Psoas muscle (tissue), 8 donors: ENCODE measurements at regions of chr2 and their contacts with region 1.

Region 1: GRCh38 chr2:109736177-109736827 is 57.8 kb upstream of the RGPD5 start:
- DNase-seq: peak in 1 of 2 donors; percentile 32
- ATAC-seq: peak; percentile 58 to 83 (median 68)
- H3K4me3 ChIP-seq: no peak overlapping the region
- H3K27ac ChIP-seq: no peak overlapping the region
- H3K4me1 ChIP-seq: peaks cover 4% of the 10 kb centered on the region
- H3K27me3 ChIP-seq: no peaks in the 10 kb centered on the region
- CTCF ChIP-seq: peak; percentile 80

Region 2: GRCh38 chr2:109545828-109546713 is 190.2 kb before region 1 on chr2:
- intact Hi-C with region 1: loop called (anchors 1 to 2 kb)
- DNase-seq: peak; percentile 53 to 75
- ATAC-seq: peak; percentile 84 to 94 (median 88)
- H3K4me3 ChIP-seq: no peak overlapping the region
- H3K27ac ChIP-seq: no peak overlapping the region
- H3K4me1 ChIP-seq: no peaks in the 10 kb centered on the region
- H3K27me3 ChIP-seq: peaks cover 0 to 4% (median 0%) of the 10 kb centered on the region in 3 donors
- CTCF ChIP-seq: peak; percentile 92

Region 3: DNA sequence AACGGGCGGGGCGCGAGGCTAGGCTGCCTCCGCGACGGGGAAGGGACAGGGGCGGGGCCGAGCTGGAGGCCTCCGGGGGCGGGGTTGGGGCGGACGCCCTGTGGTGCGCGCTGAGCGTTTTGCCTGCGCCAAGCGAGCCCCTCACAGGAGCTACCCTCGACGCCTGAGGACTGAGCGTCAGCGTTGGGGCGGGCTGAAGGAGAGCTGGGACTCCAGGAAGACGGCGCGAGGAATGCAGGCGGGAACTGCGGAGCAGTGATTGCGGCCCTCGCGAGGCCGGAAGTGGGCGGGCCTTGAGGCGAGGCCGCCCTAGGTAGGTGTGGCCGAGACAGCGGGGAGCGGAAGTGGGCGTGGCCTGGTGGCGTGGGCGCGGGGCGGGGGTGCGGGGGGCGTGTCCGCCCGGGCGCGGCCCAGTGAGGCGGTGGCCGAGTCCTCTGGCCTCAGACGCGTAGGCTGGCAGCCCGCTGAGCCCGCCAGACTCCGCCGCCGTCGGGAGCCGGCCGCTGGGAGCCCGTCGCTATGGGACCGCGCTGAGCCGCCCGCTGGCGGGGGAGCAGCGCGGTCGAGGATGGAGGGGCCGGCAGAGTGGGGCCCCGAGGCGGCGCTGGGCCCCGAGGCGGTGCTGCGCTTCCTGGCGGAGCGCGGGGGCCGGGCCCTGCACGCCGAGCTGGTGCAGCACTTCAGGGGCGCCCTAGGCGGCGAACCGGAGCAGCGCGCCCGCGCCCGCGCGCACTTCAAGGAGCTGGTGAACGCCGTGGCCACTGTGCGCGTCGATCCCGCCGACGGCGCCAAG is 122.2 kb before region 1 on chr2 and contains the starts of genes SEPTIN10 and SOWAHC:
- intact Hi-C with region 1: loop called in 1 of 2 experiments (anchors 5 kb)
- DNase-seq: peak; percentile 97 to 98
- ATAC-seq: peak; percentile 97 to 98 (median 98)
- H3K4me3 ChIP-seq: peak within 1 kb of the TSS; percentile 77
- H3K27ac ChIP-seq: peak within 1 kb of the TSS; percentile 97
- H3K4me1 ChIP-seq: peaks cover 21% of the 10 kb centered on the region
- H3K27me3 ChIP-seq: no peaks in the 10 kb centered on the region
- CTCF ChIP-seq: peak; percentile 3
- total RNA-seq, gene SEPTIN10: 26.6 to 39.8 (median 35.4) TPM
- total RNA-seq, gene SOWAHC: 0.75 to 1.1 (median 0.93) TPM

Region 4: DNA sequence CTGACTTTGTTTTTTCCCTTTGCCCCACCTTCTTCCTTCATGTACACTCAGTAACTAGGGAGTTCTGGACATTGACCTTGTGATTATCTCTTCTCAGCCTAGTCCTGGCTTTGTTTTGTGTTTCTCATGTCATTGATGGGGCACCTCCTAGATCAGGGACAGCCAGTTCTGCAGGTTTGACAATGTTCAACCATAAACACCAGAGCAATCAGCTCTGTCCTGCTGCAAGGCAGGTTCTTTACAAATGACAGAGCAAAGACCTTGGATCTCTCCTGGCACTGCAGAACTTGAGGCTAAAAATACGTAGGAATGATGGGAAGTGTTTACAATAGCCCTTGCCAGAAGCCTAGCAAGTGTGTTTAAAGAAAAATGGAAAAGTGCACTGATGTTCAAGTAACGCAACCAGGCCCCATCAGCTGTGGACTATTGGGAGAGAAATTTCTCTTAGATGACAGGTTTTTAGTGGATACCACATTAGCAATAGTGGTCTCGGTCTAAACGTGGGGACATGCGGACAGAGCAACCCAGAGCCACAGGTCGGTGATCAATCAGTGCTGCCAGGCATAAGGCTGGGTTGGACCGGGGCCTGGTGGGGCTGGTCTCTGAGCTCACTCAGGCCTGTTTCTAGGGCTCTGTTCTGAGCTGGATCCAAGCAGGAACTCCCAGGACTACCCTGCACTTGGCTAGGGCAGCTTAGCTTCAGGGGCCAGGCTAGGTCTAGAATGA is 45.3 kb before region 1 on chr2:
- intact Hi-C with region 1: no loop called
- DNase-seq: peak in 1 of 2 donors; percentile 33
- ATAC-seq: peak; percentile 68 to 87 (median 78)
- H3K4me3 ChIP-seq: no peak overlapping the region
- H3K27ac ChIP-seq: peak overlapping the region; percentile 68
- H3K4me1 ChIP-seq: peaks cover 11% of the 10 kb centered on the region
- H3K27me3 ChIP-seq: no peaks in the 10 kb centered on the region
- CTCF ChIP-seq: no peak

Region 5: GRCh38 chr2:109715313-109715805 is 20.9 kb before region 1 on chr2:
- intact Hi-C with region 1: no loop called
- DNase-seq: no peak
- ATAC-seq: no peak
- H3K4me3 ChIP-seq: no peak overlapping the region
- H3K27ac ChIP-seq: no peak overlapping the region
- H3K4me1 ChIP-seq: peaks cover 4% of the 10 kb centered on the region
- H3K27me3 ChIP-seq: no peaks in the 10 kb centered on the region
- CTCF ChIP-seq: peak; percentile 35